Heart right ventricle (tissue), 16 donors: ENCODE measurements at regions of chr4 and their contacts with region 1.

Region 1: DNA sequence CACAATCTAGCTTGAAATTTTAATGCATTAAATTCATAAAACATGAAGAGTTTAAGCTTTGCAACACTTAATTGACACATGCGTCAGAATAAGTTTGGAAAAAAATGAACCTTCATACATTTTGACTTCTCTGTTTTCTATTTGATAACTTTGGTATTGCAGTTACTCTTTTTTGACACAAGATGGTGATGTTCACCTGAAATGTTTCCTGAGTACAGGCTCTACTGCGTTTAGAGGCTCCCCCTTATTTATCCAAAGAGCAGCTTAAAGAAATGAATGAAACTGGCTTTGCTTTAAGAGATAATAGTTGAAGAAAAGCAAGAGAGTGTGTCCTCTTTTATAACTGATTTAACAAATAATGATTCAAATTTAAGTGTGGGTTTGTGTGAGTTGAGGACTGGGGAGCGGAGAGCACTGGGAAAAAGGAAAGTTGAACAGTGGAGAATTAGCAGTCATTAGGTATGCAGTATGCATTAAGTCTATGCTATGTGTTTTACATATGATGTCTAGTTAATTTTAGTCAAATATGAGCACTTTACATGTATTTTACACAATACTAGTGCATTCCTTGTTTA is 180.6 kb upstream of the NUDT6 start:
- DNase-seq: no peak
- ATAC-seq: peak in 6 of 8 donors; percentile 58 to 78 (median 72)
- H3K4me3 ChIP-seq: no peak overlapping the region
- H3K27ac ChIP-seq: peak overlapping the region in 1 of 10 donors; percentile 16
- H3K4me1 ChIP-seq: peaks cover 0 to 15% (median 4%) of the 10 kb centered on the region in 9 donors
- H3K27me3 ChIP-seq: no peaks in the 10 kb centered on the region
- CTCF ChIP-seq: peak; percentile 44 to 86 (median 78)

Region 2: GRCh38 chr4:123564758-123565346 is 461.9 kb after region 1 on chr4:
- intact Hi-C with region 1: loop called in 1 of 10 experiments (anchors 10 kb)
- DNase-seq: peak in 1 of 2 donors; percentile 69
- ATAC-seq: peak; percentile 68 to 94 (median 91)
- H3K4me3 ChIP-seq: no peak overlapping the region
- H3K27ac ChIP-seq: no peak overlapping the region
- H3K4me1 ChIP-seq: peaks cover 0 to 7% (median 4%) of the 10 kb centered on the region in 9 donors
- H3K27me3 ChIP-seq: no peaks in the 10 kb centered on the region
- CTCF ChIP-seq: peak; percentile 56 to 92 (median 73)

Region 3: GRCh38 chr4:124105212-124105611 is 1002.2 kb after region 1 on chr4:
- intact Hi-C with region 1: loop called in 7 of 10 experiments (anchors 5 to 10 kb)
- DNase-seq: no peak
- ATAC-seq: peak in 3 of 8 donors; percentile 31 to 59 (median 51)
- H3K4me3 ChIP-seq: no peak overlapping the region
- H3K27ac ChIP-seq: no peak overlapping the region
- H3K4me1 ChIP-seq: no peaks in the 10 kb centered on the region
- H3K27me3 ChIP-seq: no peaks in the 10 kb centered on the region
- CTCF ChIP-seq: no peak

Region 4: DNA sequence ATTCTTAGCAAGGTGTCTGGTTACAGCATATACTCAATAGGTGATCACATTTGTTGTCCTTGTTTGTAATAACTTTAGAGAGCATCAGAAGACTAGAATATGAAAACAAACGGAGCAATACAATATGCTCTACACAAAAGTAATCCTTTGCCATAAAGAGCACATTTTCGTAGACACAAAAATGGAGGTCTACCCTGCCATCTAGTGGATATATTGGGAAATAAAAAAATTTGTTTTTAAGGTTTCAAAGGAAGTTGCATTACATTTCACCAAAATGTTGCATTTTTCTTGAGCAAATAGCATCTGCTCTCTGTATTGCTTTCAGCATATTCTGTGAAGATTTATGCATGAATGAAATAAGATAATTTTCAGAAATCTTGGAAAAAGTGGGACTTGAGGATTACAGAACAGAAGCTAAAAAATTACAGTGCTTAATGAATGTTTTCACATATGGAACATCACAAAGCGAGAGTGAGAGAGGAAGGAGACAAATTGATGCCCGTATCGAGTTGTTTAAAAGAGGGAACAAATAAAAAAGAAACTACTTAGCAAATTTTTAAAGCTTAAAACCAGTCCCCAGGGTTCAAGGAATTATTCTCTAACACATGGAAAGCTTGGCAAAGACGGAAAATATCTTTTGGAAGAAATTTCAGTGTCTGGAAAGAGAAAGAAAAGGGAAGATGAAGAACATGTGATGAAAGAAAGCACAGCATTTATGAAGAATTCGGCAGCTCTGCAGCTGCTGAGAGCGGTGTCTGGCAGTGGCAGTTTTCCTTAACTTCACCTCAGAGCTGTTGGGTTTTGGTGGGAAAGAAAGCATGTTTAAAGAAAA is 1219.5 kb after region 1 on chr4:
- intact Hi-C with region 1: loop called in 2 of 10 experiments (anchors 5 to 10 kb)
- DNase-seq: no peak
- ATAC-seq: peak in 1 of 8 donors; percentile 57
- H3K4me3 ChIP-seq: peak overlapping the region in 6 of 10 donors; percentile 5 to 26 (median 26)
- H3K27ac ChIP-seq: no peak overlapping the region
- H3K4me1 ChIP-seq: peaks cover 0 to 3% (median 0%) of the 10 kb centered on the region in 9 donors
- H3K27me3 ChIP-seq: no peaks in the 10 kb centered on the region
- CTCF ChIP-seq: peak; percentile 29 to 74 (median 65)